ENCODE measurements at regions of chr4 and their contacts with region 1.

Region 1: GRCh38 chr4:183471946-183472708 is 27.7 kb downstream of the CDKN2AIP start:
- DNase-seq: peak; percentile 71 to 92 (median 82)
- H3K4me3 ChIP-seq: peak overlapping the region in 27 of 59 donors; percentile 1 to 50 (median 20)
- H3K27ac ChIP-seq: peak overlapping the region in 1 of 59 donors; percentile 13
- H3K27me3 ChIP-seq: no peaks in the 10 kb centered on the region
- CTCF ChIP-seq: peak; percentile 85 to 98 (median 93)

Region 2: GRCh38 chr4:183318656-183319055 is 153.5 kb before region 1 on chr4:
- intact Hi-C with region 1: no loop called
- DNase-seq: no peak
- H3K4me3 ChIP-seq: no peak overlapping the region
- H3K27ac ChIP-seq: no peak overlapping the region
- H3K27me3 ChIP-seq: no peaks in the 10 kb centered on the region
- CTCF ChIP-seq: no peak

Region 3: GRCh38 chr4:183411231-183411861 is 60.8 kb before region 1 on chr4:
- intact Hi-C with region 1: no loop called
- DNase-seq: no peak
- H3K4me3 ChIP-seq: no peak overlapping the region
- H3K27ac ChIP-seq: no peak overlapping the region
- H3K27me3 ChIP-seq: no peaks in the 10 kb centered on the region
- CTCF ChIP-seq: no peak

Region 4: GRCh38 chr4:183602557-183603027 is 130.5 kb after region 1 on chr4:
- intact Hi-C with region 1: loop called (anchors 5 kb)
- DNase-seq: no peak
- H3K4me3 ChIP-seq: no peak overlapping the region
- H3K27ac ChIP-seq: no peak overlapping the region
- H3K27me3 ChIP-seq: peaks cover 0 to 4% (median 0%) of the 10 kb centered on the region in 45 donors
- CTCF ChIP-seq: peak in 45 of 56 donors; percentile 16 to 60 (median 39)

Region 5: DNA sequence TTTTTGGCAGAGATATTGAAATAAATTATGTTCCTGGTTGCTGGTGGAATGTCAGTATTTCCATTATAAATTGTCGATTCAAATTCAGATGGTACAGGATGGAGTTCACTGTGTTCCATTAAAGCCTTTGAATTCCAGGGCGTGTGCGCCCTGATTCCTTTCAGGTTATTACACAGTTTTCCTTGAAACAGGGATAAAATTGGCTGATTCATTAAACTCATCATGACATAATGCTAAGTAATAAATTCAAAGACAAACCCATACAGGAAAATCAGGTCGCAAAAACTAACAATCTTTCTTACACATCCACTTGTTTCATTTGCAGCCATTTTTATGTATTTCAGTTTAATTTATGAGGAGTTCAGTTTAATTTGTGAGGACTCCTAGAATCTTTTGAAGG is 135.8 kb after region 1 on chr4:
- intact Hi-C with region 1: loop called (anchors 5 kb)
- DNase-seq: no peak
- H3K4me3 ChIP-seq: no peak overlapping the region
- H3K27ac ChIP-seq: no peak overlapping the region
- H3K27me3 ChIP-seq: peaks cover 0 to 4% (median 0%) of the 10 kb centered on the region in 45 donors
- CTCF ChIP-seq: no peak

Region 6: DNA sequence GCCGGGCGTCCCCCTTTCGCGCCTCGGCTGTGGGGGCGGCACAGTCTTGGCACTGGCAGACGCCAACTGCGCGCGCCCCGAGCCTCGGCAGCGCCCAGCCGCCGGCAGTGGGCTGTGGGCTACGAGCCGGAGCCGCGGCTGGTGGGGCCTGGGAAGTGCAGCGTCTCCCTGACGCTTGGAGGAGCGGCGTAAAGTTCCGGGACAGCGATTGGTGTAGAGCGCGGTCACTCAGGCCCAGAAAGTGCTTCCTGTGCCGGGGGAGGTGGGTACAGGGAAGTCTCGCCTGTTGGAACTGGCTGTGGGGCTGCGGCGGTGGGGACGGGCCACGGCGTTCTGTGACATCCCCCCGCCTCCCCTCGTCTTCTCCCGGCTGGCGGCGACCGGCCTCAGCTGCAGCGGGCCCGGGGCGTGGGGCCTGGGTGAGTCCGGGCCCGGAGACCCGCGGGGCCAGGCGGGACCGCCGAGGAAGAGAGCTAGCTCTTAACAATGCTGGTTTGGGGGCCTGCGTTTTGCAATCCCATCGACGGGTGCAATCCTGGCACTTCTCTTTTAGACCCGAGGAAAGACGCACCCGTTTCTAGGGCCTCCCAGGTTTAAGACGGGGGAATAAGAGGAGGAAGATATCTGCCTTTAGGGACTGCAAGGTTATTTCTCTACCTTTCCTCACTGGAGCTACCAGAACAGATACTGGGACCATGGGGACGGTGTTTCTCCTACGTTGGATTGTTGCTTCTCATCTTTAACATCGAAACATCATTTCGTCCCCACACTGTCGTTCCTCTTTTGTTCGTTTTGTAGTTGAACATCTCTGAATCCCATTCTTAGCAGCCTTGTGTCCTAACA is 187.1 kb after region 1 on chr4 and contains the starts of genes RWDD4 and TRAPPC11:
- intact Hi-C with region 1: loop called in 1 of 2 experiments (anchors 10 kb)
- DNase-seq: peak; percentile 96 to 99 (median 97)
- H3K4me3 ChIP-seq: peak within 1 kb of the TSS; percentile 46 to 97 (median 90)
- H3K27ac ChIP-seq: peak within 1 kb of the TSS in 58 of 59 donors; percentile 3 to 95 (median 86)
- H3K27me3 ChIP-seq: no peaks in the 10 kb centered on the region
- CTCF ChIP-seq: peak in 38 of 56 donors; percentile 7 to 56 (median 33)
- total RNA-seq, gene RWDD4: 6.1 to 15.7 (median 10.6) TPM
- total RNA-seq, gene TRAPPC11: 32.4 to 73.9 (median 52.2) TPM